ENCODE measurements at regions of chr4 and their contacts with region 1.

Region 1: DNA sequence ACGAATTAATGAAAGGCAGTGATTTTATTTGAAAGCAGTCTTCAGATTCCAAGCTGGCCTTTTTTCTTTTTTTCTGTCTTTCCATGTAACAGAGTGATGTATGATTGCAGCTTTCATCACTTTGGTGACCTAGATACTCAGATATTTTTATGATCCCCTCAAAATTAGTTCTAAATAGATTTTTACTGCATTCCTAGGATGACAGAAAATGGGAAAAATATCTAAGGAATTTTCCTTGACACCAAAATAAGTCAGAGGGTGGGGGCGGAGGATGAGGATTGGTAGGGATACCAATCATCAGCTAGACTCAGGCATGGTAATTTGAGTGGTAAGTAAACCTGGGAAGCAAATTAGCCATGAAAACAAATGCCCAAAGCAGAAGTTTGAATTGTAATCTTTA is 11.9 kb upstream of the HMGB2 start:
- DNase-seq: no peak
- H3K4me3 ChIP-seq: no peak overlapping the region
- CTCF ChIP-seq: no peak

Region 2: DNA sequence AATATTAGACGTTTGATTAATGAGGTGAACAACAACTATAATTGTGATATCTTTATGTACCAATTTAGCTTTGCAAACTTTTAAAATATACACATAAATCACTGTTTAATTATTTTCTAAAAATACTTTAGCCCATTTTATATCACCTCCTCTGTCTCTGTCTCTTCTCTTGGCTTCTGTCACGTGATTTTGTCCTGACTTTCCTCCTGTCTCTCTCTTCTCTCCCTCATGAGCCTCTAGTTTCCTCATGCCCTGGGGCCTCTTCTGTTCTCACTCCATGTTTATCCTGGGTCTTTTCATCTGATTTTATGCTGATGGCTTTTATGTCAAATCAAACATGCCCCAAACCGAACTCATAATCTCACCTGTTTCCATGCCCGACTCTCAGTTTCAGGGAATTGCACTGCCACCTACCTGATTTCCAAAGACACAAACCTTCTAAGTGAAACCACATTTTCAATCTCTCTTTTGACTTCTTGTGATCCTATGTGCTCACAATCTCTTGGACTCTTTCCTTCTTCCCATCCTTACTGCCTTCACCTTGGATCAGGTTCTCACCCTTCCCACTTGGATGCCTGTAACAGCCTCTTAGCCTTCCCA is 480.4 kb before region 1 on chr4:
- CTCF ChIA-PET with region 1: no interaction called
- POLR2A ChIA-PET with region 1: no interaction called
- DNase-seq: no peak
- H3K4me3 ChIP-seq: no peak overlapping the region
- CTCF ChIP-seq: no peak

Region 3: GRCh38 chr4:173334085-173334772 is 11.8 kb before region 1 on chr4 and contains the start of gene HMGB2:
- CTCF ChIA-PET with region 1: interaction called, 5 read pairs
- POLR2A ChIA-PET with region 1: interaction called, 22 read pairs
- DNase-seq: peak; percentile 100
- H3K4me3 ChIP-seq: peak within 1 kb of the TSS; percentile 98
- CTCF ChIP-seq: no peak

Region 4: GRCh38 chr4:173360587-173361221 is 14.6 kb after region 1 on chr4:
- CTCF ChIA-PET with region 1: interaction called, 20 read pairs
- POLR2A ChIA-PET with region 1: no interaction called
- DNase-seq: no peak
- H3K4me3 ChIP-seq: no peak overlapping the region
- CTCF ChIP-seq: peak; percentile 26

Measured in AG04449 (cell line).